Activated CD4-positive, alpha-beta memory T cell treated with anti-CD3 and anti-CD28 coated beads for 36 hours (primary cell): ENCODE measurements at regions of chr3 and their contacts with region 1.

Region 1: DNA sequence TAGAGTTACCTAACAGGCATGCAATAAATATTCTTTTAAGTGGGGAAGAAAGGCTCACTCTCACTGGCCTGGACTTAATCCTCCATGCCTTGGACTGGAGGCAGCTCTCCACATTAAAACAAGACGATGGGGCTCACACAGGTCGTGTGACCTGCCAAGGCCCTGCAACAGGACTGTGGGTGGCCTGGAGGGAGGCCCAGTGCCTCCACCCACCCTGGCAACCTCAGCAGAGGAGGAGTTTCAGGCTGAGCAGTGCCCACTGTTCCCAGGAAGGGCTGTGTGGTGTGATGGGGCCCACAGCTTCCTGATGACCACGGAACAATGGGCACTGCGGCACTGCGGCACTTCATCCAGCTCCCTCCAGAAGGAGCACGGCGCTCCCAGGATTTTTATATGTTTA is 5.5 kb downstream of the UROC1 start:
- DNase-seq: no peak
- H3K4me3 Mint-ChIP-seq: no peak overlapping the region
- H3K27ac Mint-ChIP-seq: no peak overlapping the region
- H3K4me1 Mint-ChIP-seq: no peaks in the 10 kb centered on the region
- H3K27me3 Mint-ChIP-seq: no peaks in the 10 kb centered on the region

Region 2: GRCh38 chr3:126522363-126522788 is 10.3 kb after region 1 on chr3:
- CTCF ChIA-PET with region 1: interaction called, 15 read pairs
- POLR2A ChIA-PET with region 1: no interaction called
- intact Hi-C with region 1: no loop called
- DNase-seq: peak; percentile 43
- H3K4me3 Mint-ChIP-seq: no peak overlapping the region
- H3K27ac Mint-ChIP-seq: no peak overlapping the region
- H3K4me1 Mint-ChIP-seq: no peaks in the 10 kb centered on the region
- H3K27me3 Mint-ChIP-seq: peaks cover 15% of the 10 kb centered on the region

Region 3: GRCh38 chr3:126659945-126660886 is 148.2 kb after region 1 on chr3:
- CTCF ChIA-PET with region 1: no interaction called
- POLR2A ChIA-PET with region 1: no interaction called
- intact Hi-C with region 1: no loop called
- DNase-seq: no peak
- H3K4me3 Mint-ChIP-seq: no peak overlapping the region
- H3K27ac Mint-ChIP-seq: no peak overlapping the region
- H3K4me1 Mint-ChIP-seq: peaks cover under 1% of the 10 kb centered on the region
- H3K27me3 Mint-ChIP-seq: peaks cover 18% of the 10 kb centered on the region

Region 4: GRCh38 chr3:127288921-127289705 is 777.1 kb after region 1 on chr3:
- CTCF ChIA-PET with region 1: no interaction called
- POLR2A ChIA-PET with region 1: no interaction called
- intact Hi-C with region 1: no loop called
- DNase-seq: peak; percentile 33
- H3K4me3 Mint-ChIP-seq: no peak overlapping the region
- H3K27ac Mint-ChIP-seq: no peak overlapping the region
- H3K4me1 Mint-ChIP-seq: no peaks in the 10 kb centered on the region
- H3K27me3 Mint-ChIP-seq: peaks cover 2% of the 10 kb centered on the region